PC-9 (cell line): ENCODE measurements at regions of chr5 and their contacts with region 1.

Region 1: DNA sequence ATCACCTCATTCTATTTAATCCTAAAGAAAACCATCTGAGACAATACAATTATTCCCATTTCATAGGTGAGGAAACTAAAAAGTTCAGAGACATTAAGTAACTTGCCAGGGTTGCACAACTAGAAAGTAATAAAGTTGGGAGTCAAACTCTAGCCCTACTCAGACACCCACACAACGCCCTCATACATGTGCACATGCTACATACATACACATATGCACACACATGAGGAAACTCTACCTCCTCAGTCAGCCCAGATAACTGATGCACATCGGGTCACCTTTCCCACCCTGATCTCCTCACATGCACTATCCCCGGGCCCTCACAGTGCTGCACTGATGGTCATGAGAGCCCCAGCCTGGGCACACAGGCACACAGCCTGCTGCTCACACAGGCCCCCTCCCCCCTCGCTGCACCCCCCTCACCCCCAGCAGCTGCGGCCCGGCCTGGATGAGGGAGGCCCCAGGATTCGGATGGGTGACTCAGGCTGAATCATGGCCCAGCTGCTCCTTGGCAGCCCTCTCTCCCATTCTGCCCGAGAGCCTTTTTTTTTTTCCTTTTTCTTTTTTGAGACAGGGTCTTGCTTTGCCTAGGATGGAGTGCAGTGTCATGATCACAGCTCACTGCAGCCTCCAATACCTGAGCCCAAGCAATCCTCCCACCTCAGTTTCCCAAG is 5.0 kb upstream of the GPRIN1 start:
- DNase-seq: no peak
- H3K4me3 ChIP-seq: no peak overlapping the region
- H3K27ac ChIP-seq: no peak overlapping the region
- H3K4me1 ChIP-seq: peaks cover 24% of the 10 kb centered on the region; the same call in 1 of the 2 replicates
- H3K27me3 ChIP-seq: no peaks in the 10 kb centered on the region
- CTCF ChIP-seq: no peak

Region 2: DNA sequence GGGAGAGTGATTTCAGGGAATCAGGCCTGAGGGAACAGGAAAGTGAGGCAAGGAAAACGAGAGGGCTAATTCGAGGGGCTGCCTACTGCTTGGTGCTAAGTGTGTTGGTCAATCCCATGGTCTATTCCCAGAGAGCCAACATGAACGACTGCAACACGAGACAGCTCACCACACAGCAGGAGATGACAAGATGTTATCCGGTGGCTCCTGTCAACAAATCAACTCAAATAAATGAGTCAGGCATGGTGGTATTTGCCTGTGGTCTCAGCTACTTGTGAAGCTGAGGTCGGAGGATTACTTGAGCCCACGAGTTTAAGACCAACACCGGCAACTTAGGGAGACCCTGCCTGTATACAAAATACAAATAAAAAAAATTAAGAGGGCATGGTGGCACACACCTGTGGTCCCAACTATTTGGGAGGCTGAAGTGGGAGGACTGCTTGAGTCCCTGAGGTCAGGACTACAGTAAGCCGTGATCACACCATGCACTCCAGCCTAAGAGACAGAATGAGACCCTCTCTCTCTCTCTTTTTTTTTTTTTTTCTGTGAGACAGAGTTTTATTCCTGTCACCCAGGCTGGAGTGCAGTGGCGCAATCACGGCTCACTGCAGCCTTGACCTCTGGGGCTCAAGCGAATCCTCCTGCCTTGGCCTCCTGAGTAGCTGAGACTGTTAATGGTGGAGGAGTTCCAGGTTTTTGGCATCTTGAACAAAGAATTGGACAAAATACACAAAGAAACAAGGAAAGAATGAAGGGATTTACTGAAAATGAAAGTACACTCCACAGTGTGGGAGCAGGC is 175.8 kb before region 1 on chr5:
- CTCF ChIA-PET with region 1: no interaction called
- POLR2A ChIA-PET with region 1: interaction called, 13 read pairs
- intact Hi-C with region 1: no loop called
- DNase-seq: peak; percentile 46 to 94
- H3K4me3 ChIP-seq: no peak overlapping the region
- H3K27ac ChIP-seq: peak overlapping the region; percentile 69
- H3K4me1 ChIP-seq: peaks cover 54% of the 10 kb centered on the region
- H3K27me3 ChIP-seq: no peaks in the 10 kb centered on the region
- CTCF ChIP-seq: no peak

Region 3: GRCh38 chr5:176658007-176658599 is 43.2 kb after region 1 on chr5:
- CTCF ChIA-PET with region 1: no interaction called
- POLR2A ChIA-PET with region 1: no interaction called
- intact Hi-C with region 1: no loop called
- DNase-seq: peak in 1 of 2 experiments; percentile 60
- H3K4me3 ChIP-seq: no peak overlapping the region
- H3K27ac ChIP-seq: no peak overlapping the region
- H3K4me1 ChIP-seq: no peaks in the 10 kb centered on the region
- H3K27me3 ChIP-seq: no peaks in the 10 kb centered on the region
- CTCF ChIP-seq: peak; percentile 87